Endothelial cell of umbilical vein (primary cell): ENCODE measurements at regions of chr22 and their contacts with region 1.

Region 1: DNA sequence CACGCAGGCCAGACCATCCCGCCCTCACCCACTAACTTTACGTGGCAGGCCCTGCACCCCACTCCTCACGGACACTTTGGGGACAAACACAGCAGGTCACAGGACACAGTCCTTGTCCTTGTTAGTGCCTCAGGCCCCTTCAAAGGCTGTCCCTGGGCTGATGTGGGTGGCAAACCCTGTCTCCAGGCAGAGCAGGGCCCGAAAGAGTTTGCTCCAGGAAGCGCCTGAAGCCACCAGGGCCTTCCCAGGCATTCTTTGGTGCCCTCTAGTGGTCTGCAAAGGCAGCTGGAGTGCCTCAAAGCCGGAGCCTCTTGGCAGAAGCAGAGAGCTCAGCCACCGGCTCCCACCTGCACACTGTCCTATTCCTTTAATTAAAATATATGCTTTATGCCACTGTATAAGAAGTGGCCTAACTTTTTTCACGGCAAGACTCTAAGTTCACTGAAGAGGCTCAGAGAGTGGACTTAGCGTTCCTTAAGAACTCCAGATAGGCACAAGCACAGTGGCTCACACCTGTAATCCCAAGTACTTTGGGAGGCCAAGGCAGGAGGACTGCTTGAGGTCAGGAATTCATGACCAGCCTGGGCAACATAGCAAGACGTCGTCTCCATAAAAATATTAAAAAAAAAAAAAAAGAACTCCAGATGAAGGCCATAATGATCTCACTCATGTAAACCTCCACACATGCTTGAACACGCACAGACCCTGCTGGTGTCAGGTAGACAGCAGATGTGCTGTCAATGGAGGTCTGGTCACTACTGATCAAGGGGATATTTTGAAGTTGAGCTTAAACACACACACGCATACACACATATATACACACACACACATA is 11.1 kb downstream of the TXN2 start:
- DNase-seq: peak; percentile 81
- H3K4me3 ChIP-seq: no peak overlapping the region
- H3K27ac ChIP-seq: peak overlapping the region; percentile 26
- H3K4me1 ChIP-seq: peaks cover 35% of the 10 kb centered on the region
- H3K27me3 ChIP-seq: no peaks in the 10 kb centered on the region
- CTCF ChIP-seq: peak; percentile 90 to 97
- POLR2A ChIP-seq: no peak

Region 2: GRCh38 chr22:36301384-36301828 is 169.0 kb before region 1 on chr22:
- CTCF ChIA-PET with region 1: interaction called, 68 read pairs
- POLR2A ChIA-PET with region 1: no interaction called
- dilution Hi-C with region 1: no loop called
- intact Hi-C with region 1: loop called (anchors 1 kb)
- DNase-seq: peak; percentile 60
- H3K4me3 ChIP-seq: no peak overlapping the region
- H3K27ac ChIP-seq: no peak overlapping the region
- H3K4me1 ChIP-seq: peaks cover 10% of the 10 kb centered on the region
- H3K27me3 ChIP-seq: no peaks in the 10 kb centered on the region
- CTCF ChIP-seq: peak; percentile 88
- POLR2A ChIP-seq: no peak

Region 3: GRCh38 chr22:36325154-36326031 is 145.0 kb before region 1 on chr22:
- CTCF ChIA-PET with region 1: interaction called, 33 read pairs
- POLR2A ChIA-PET with region 1: interaction called, 6 read pairs
- dilution Hi-C with region 1: no loop called
- intact Hi-C with region 1: loop called (anchors 1 kb)
- DNase-seq: peak; percentile 64
- H3K4me3 ChIP-seq: no peak overlapping the region
- H3K27ac ChIP-seq: peak overlapping the region; percentile 72
- H3K4me1 ChIP-seq: peaks cover 75% of the 10 kb centered on the region
- H3K27me3 ChIP-seq: no peaks in the 10 kb centered on the region
- CTCF ChIP-seq: no peak
- POLR2A ChIP-seq: no peak

Region 4: DNA sequence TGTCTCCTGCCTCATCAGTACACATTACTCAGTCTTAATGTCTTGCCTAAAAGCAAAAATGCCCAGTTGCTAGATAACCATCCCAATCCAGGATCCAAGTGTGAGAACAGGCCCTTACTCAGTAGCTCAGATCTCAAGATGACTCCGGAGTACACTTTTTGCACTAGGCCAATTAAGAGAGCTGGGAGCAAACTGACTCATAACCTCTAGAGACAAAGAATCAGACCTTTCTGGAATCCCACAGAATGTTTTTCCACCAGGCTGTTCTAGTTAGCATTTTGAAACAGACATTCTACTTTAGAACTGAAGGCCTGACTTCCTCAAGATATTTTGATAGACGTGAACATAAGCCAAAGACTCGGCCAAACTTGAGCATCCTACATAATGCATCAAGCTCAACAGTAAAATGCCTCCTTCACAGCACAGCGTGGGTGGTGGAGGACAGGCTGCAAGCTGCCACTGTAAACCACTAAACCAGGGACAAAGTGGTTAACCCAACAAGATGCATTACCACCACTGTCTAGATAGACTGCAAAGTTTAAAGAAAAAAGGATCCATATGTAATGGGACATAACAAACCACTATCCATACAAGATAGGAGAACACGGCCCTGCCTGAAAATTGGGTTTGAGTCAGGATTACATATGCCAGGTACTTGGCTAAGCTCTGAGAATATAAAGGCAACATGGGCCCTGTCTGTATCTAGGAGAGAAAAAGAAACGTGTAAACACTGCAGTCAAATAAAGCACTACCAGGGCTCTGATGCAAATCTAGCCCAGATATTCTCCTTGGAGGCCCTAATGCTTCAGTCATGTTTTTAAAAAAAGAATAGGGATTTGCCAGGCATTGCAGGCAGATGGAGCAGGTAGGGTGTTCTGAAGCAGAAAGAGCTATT is 131.0 kb before region 1 on chr22:
- CTCF ChIA-PET with region 1: interaction called, 56 read pairs
- POLR2A ChIA-PET with region 1: no interaction called
- dilution Hi-C with region 1: no loop called
- intact Hi-C with region 1: no loop called
- DNase-seq: peak; percentile 52
- H3K4me3 ChIP-seq: no peak overlapping the region
- H3K27ac ChIP-seq: peak overlapping the region; percentile 47
- H3K4me1 ChIP-seq: peaks cover 95% of the 10 kb centered on the region
- H3K27me3 ChIP-seq: no peaks in the 10 kb centered on the region
- CTCF ChIP-seq: no peak
- POLR2A ChIP-seq: no peak

Region 5: GRCh38 chr22:36359181-36359996 is 111.0 kb before region 1 on chr22:
- CTCF ChIA-PET with region 1: interaction called, 19 read pairs
- POLR2A ChIA-PET with region 1: interaction called, 3 read pairs
- dilution Hi-C with region 1: no loop called
- intact Hi-C with region 1: no loop called
- DNase-seq: no peak
- H3K4me3 ChIP-seq: no peak overlapping the region
- H3K27ac ChIP-seq: peak overlapping the region; percentile 56
- H3K4me1 ChIP-seq: peaks cover 92% of the 10 kb centered on the region
- H3K27me3 ChIP-seq: no peaks in the 10 kb centered on the region
- CTCF ChIP-seq: no peak
- POLR2A ChIP-seq: no peak

Region 6: GRCh38 chr22:36369922-36370791 is 100.2 kb before region 1 on chr22:
- CTCF ChIA-PET with region 1: interaction called, 63 read pairs
- POLR2A ChIA-PET with region 1: interaction called, 5 read pairs
- dilution Hi-C with region 1: no loop called
- intact Hi-C with region 1: loop called (anchors 5 kb)
- DNase-seq: peak; percentile 76
- H3K4me3 ChIP-seq: peak overlapping the region in 1 of 3 experiments; percentile 0
- H3K27ac ChIP-seq: peak overlapping the region; percentile 91
- H3K4me1 ChIP-seq: peaks cover 97% of the 10 kb centered on the region
- H3K27me3 ChIP-seq: no peaks in the 10 kb centered on the region
- CTCF ChIP-seq: no peak
- POLR2A ChIP-seq: peak; percentile 20

Region 7: DNA sequence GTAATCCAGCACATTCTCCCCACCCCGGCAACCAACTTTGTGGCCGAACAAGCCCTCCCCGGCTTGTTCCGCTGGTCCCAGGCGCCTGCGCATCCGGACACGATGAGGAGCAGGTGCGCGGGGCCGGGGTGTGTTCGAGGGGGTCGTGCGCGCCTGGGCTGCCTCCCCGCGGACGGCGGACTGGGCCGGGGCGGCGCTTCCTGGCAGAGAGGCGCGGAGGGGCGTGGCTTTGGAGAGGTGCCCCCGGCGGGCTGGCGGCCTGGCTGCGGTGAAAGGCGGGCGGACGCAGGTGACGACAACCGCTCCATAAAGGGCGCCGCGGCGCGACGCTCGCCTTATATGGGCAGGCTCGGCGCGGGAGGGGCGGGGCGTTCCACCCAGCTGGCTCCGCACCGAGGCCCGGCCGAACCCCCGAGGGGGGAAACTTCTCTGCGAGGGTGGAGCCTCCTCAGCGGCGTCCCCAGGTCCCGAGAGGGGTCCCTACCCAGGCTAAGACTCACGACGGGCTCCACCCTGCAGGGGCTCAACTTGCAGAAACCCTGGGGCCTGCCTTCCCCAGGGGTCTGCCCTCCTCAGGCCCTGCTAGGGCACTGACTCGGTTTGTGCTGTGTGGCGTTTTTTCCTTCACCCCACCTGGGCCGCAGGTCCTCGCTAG is 15.3 kb before region 1 on chr22:
- CTCF ChIA-PET with region 1: interaction called, 22 read pairs
- POLR2A ChIA-PET with region 1: interaction called, 5 read pairs
- dilution Hi-C with region 1: no loop called
- intact Hi-C with region 1: loop called (anchors 1 kb)
- DNase-seq: peak; percentile 92
- H3K4me3 ChIP-seq: peak overlapping the region; percentile 20 to 50 (median 47)
- H3K27ac ChIP-seq: peak overlapping the region; percentile 72
- H3K4me1 ChIP-seq: peaks cover 24% of the 10 kb centered on the region
- H3K27me3 ChIP-seq: no peaks in the 10 kb centered on the region
- CTCF ChIP-seq: peak in 1 of 2 donors; percentile 8
- POLR2A ChIP-seq: peak; percentile 32